A673 (cell line): ENCODE measurements at regions of chr19 and their contacts with region 1.

Region 1: GRCh38 chr19:49850473-49851342 is at the start of gene PTOV1:
- DNase-seq: peak; percentile 96
- H3K4me3 ChIP-seq: peak within 1 kb of the TSS; percentile 74
- H3K27ac ChIP-seq: peak within 1 kb of the TSS; percentile 99
- H3K4me1 ChIP-seq: peaks cover 19% of the 10 kb centered on the region
- H3K27me3 ChIP-seq: no peaks in the 10 kb centered on the region
- CTCF ChIP-seq: no peak
- total RNA-seq, gene PTOV1: 331 and 356 TPM in 2 replicates

Region 2: GRCh38 chr19:49497047-49497788 is 353.5 kb before region 1 on chr19:
- CTCF ChIA-PET with region 1: no interaction called
- POLR2A ChIA-PET with region 1: no interaction called
- intact Hi-C with region 1: loop called (anchors 5 kb)
- DNase-seq: peak; percentile 87
- H3K4me3 ChIP-seq: peak overlapping the region; percentile 82
- H3K27ac ChIP-seq: peak overlapping the region; percentile 99
- H3K4me1 ChIP-seq: peaks cover 33% of the 10 kb centered on the region
- H3K27me3 ChIP-seq: no peaks in the 10 kb centered on the region
- CTCF ChIP-seq: no peak

Region 3: GRCh38 chr19:49817964-49818648 is 32.6 kb before region 1 on chr19 and contains the start of gene MED25:
- CTCF ChIA-PET with region 1: no interaction called
- POLR2A ChIA-PET with region 1: interaction called, 4 read pairs
- intact Hi-C with region 1: loop called (anchors 2 kb)
- DNase-seq: peak; percentile 91
- H3K4me3 ChIP-seq: peak within 1 kb of the TSS; percentile 88
- H3K27ac ChIP-seq: peak within 1 kb of the TSS; percentile 93
- H3K4me1 ChIP-seq: peaks cover 12% of the 10 kb centered on the region
- H3K27me3 ChIP-seq: no peaks in the 10 kb centered on the region
- CTCF ChIP-seq: 0 out of 2 replicates have a peak, but pooled peaks have one; percentile 10
- total RNA-seq, gene MED25: 93.0 and 111 TPM in 2 replicates